CD4-positive, alpha-beta T cell (primary cell): ENCODE measurements at regions of chr12 and their contacts with region 1.

Region 1: DNA sequence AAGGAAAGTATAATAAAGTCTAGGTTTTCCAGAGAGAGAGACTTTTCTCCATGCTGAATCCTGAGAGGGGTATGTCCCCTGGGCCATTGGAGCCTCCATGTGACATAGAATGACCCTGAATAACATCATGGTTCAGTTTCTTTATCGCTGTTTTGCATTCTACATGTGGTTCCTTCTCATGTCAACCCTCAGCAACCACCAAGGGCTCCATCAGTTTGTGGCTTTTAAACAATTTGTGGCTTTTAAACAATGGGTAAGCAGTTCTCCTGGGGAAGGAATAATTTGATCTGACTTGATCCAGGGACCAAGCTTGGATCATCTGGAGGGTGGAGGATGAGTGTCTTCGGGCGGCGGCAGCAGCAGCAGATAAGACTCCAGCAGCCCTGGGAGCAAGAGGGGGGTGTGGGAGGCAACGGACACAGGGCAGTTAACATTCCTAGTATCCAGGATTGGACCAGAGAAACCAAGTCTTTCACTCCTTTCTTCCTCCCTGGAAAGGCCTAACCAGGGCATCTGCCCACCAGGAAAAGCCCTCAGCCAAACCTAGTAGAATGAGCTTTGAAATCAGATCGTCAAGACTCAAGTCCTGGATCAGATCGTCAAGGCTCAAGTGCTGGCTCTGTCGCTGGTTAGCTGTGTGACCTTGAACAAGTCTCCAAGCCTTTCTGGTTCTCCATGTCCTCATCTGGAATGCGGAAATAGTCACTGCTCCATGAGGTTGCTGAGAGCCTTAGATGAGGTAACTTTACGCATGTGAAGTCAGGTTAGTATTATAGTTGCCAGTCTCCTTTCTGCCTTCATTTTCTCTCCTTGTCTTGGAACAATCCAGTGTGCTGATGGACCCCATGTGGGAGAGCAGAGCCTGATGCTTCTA is 27.8 kb upstream of the FAM222A start:
- DNase-seq: no peak
- ATAC-seq: no peak
- H3K4me3 ChIP-seq: no peak overlapping the region
- H3K4me3 Mint-ChIP-seq: no peak overlapping the region
- H3K27ac ChIP-seq: no peak overlapping the region
- H3K27ac Mint-ChIP-seq: no peak overlapping the region
- H3K4me1 ChIP-seq: no peaks in the 10 kb centered on the region
- H3K4me1 Mint-ChIP-seq: no peaks in the 10 kb centered on the region
- H3K27me3 ChIP-seq: no peaks in the 10 kb centered on the region
- H3K27me3 Mint-ChIP-seq: peaks cover 9% of the 10 kb centered on the region
- CTCF ChIP-seq: no peak

Region 2: GRCh38 chr12:109739747-109740693 is 54.2 kb after region 1 on chr12:
- CTCF ChIA-PET with region 1: no interaction called
- POLR2A ChIA-PET with region 1: no interaction called
- intact Hi-C with region 1: loop called in 1 of 2 experiments (anchors 5 kb)
- DNase-seq: peak in 3 of 14 experiments; percentile 1 to 31 (median 3)
- ATAC-seq: no peak
- H3K4me3 ChIP-seq: no peak overlapping the region
- H3K4me3 Mint-ChIP-seq: no peak overlapping the region
- H3K27ac ChIP-seq: no peak overlapping the region
- H3K27ac Mint-ChIP-seq: no peak overlapping the region
- H3K4me1 ChIP-seq: no peaks in the 10 kb centered on the region
- H3K4me1 Mint-ChIP-seq: no peaks in the 10 kb centered on the region
- H3K27me3 ChIP-seq: peaks cover 2 to 3% of the 10 kb centered on the region in 2 experiments
- H3K27me3 Mint-ChIP-seq: peaks cover 14% of the 10 kb centered on the region
- CTCF ChIP-seq: no peak